MCF 10A (cell line): ENCODE measurements at regions of chr7 and their contacts with region 1.

Region 1: DNA sequence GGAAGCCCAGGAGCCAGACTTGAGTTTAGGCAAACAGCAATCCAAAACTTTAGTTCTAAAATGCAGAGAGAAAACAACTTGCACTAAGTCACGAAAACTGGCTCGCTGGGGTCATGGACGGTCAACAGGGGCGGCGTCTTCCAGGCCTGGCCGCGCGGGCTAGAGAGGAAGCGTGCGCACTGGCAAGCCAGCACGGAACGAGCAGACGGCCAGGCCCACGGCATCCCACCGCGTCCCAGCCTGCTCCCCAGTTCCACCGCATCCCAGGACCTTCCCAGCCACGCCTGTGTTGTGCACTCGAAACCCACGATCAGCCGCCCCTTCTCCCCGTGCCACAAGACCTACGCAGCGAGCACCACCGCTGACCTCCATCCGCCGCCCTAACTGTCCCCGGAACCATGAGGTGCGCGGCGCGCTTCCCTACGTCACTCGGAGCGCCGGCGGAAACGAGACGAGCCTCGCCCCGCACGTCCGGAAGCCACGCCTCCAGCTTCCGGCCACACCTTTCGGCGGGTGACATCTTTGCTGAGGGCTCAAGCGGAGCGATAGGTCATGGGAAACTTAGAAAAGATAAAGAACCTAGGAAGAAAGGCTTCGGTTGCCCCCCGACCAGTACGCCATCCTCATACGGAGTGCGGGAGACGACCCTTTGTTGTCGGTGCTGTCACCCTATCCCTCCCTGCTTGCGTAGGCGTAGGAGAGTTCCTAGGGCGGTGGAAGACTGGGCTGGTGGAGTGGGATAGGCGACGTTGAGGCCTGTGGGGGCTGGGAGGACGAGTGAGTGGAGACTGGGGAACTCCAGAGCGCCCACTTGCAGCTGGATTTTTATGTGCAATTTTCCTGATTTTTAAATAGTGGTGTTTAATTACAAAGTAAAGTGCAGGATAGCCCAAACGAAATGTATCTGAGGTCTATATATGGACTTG is at the start of gene TBRG4:
- DNase-seq: peak; percentile 94
- H3K4me3 Mint-ChIP-seq: peak within 1 kb of the TSS; percentile 91
- H3K27ac Mint-ChIP-seq: peak within 1 kb of the TSS; percentile 97
- H3K4me1 Mint-ChIP-seq: peaks cover 19% of the 10 kb centered on the region
- H3K27me3 Mint-ChIP-seq: no peaks in the 10 kb centered on the region
- CTCF ChIP-seq: no peak
- total RNA-seq, gene TBRG4: 77.2 and 85.7 TPM in 2 replicates

Region 2: DNA sequence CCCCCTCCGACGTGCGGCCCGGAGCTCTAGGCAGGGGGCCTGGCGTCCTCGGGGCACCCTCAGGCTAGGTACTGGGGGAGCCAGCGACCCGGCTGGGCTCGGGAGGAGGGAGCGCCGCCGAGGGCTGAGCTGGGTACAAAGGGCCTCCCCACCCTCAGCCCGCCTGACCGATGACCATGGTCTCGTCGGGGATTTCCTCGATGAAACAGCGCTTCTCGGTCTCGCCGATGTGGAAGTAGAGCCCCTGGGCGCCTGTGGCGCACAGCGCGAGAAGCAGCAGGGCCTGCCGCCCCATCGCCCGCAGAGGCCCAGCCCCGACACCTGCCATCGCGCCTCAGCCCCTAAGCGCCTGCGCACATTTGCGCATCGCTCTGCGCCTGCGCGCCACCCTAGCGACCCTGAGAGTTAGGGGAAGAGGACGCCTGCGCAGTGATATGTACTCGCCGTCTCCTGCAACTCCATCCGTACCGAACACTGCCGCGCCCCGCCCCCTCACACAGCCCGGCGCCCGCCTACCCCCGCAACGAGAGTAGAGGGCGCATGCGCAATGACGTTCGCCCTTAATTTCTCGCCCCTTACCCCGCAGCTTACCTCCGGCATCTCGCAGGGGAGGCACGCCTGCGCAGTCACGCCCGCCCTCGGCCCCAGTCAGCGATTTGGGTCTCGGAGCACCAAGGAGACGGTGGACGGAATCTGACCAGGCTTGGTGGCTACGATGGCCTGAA is 529.5 kb before region 1 on chr7 and contains the start of gene TMED4:
- CTCF ChIA-PET with region 1: no interaction called
- POLR2A ChIA-PET with region 1: interaction called, 16 read pairs
- intact Hi-C with region 1: no loop called
- DNase-seq: peak; percentile 99
- H3K4me3 Mint-ChIP-seq: peak within 1 kb of the TSS; percentile 85
- H3K27ac Mint-ChIP-seq: peak within 1 kb of the TSS; percentile 93
- H3K4me1 Mint-ChIP-seq: peaks cover 6% of the 10 kb centered on the region
- H3K27me3 Mint-ChIP-seq: no peaks in the 10 kb centered on the region
- CTCF ChIP-seq: no peak
- total RNA-seq, gene TMED4: 49.7 and 58.0 TPM in 2 replicates

Region 3: DNA sequence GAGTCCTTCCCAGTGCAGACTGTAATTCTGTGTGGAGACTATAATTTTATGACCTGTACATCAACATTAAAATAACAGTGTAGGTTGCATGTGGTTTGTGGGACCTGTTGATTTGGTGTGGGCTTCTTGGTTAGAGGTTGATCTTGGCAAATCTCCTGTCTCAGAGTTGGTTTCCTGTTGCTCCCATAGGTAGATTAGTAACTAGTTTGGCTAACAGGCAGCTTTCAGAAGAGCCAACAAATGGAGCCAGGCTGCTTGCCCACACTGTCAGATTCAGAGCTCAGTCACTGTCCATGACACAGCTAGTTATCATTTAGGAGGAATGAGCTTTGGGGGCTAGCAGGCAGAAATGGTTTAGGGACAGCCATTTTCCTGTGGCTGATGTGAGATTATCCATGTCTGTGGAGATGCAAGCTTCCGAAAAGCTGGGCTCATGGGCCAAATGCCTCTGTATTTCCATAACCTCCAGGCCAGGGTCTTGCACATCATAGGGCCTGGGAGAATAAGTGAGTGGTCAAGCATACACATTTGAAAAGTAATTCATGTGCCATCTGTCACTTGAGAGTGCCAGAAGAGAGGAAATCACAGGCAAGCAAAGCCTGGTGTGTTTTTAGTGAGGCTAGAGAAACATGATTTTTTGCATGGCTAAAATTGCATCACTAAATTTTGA is 78.2 kb before region 1 on chr7:
- CTCF ChIA-PET with region 1: no interaction called
- POLR2A ChIA-PET with region 1: interaction called, 10 read pairs
- intact Hi-C with region 1: no loop called
- DNase-seq: peak; percentile 50
- H3K4me3 Mint-ChIP-seq: no peak overlapping the region
- H3K27ac Mint-ChIP-seq: peak overlapping the region; percentile 90
- H3K4me1 Mint-ChIP-seq: peaks cover 33% of the 10 kb centered on the region
- H3K27me3 Mint-ChIP-seq: no peaks in the 10 kb centered on the region
- CTCF ChIP-seq: no peak

Region 4: DNA sequence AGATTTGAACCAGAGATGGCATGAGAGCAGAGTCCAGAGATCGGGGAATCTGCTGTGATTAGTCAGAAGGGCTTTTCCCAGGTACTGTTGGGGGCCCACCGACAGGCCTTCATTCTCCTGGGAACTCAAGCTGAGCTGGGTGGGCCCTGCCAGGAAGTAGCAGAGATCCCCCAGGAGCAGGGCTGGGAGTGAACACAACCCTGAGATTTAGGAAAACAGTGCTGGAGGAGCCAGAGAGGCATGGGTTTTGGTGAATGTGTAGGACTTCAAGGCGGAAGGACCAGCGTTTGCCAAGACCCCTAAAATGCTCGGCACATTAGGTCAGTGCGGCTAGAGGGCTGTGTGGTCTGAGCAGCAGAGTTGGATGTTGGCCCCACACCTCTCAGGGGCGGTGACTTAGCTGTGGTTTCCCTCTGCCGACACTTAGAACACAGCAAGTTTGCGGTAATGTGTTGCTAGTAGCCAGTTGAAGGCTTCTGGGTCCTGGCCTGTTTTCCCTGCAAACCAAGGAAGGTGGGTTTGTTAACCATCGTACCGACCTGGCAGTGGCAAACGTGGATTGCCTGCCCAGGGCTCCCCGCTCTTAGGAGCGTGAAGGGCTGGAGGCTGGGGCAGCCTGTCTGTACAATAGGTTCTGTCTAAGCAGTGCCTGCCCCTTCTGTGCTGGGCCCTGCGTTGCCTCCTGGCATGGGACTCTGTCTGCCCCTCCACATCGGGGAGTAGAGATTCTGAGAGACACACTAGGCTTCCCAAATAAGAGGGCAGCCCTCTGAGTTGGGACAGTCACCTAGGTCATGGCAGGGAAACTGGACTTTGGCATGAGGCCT is 36.8 kb before region 1 on chr7:
- CTCF ChIA-PET with region 1: no interaction called
- POLR2A ChIA-PET with region 1: no interaction called
- intact Hi-C with region 1: no loop called
- DNase-seq: no peak
- H3K4me3 Mint-ChIP-seq: no peak overlapping the region
- H3K27ac Mint-ChIP-seq: no peak overlapping the region
- H3K4me1 Mint-ChIP-seq: peaks cover 21% of the 10 kb centered on the region
- H3K27me3 Mint-ChIP-seq: no peaks in the 10 kb centered on the region
- CTCF ChIP-seq: no peak

Region 5: DNA sequence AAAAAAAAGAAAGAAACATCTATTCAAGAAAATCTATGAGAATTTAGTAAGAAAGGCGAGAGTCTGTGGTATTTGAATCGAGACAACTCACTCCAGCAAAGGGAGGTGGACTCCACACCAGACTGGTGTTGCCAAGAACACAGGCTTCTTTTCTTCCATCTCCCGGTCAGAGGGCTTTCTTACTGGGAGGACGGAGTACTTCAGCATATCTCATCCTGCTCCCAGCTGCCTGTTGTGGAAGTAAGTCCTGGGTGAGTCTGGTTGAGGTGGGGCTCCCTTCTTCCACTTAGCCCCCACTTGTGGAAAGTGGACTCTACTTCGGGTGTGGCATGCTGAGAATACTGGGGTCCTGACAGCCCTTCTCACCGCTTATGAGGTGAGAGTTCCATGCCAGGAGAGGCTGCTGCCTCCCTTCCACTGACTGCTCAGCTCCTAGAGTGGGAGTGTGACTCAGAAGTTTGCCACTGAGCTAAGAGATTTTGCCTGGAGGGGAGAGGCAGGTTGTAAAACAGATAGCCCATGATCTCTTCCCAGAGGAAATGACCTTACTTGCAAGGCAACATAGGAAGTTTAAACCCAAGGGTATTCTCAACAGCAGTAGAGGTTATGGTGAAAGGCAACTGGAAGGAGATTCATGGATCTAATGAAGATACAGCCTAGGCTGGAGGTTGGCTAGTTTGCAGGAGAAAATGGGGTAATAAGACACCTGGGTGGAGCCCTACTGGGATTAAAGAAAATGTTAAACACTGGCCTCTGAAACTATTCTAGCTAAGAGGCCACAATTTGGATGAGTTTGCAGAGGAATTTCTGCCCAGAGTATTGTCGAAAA is 19.2 kb before region 1 on chr7:
- CTCF ChIA-PET with region 1: interaction called, 3 read pairs
- POLR2A ChIA-PET with region 1: interaction called, 16 read pairs
- intact Hi-C with region 1: no loop called
- DNase-seq: peak; percentile 74
- H3K4me3 Mint-ChIP-seq: no peak overlapping the region
- H3K27ac Mint-ChIP-seq: no peak overlapping the region
- H3K4me1 Mint-ChIP-seq: peaks cover 12% of the 10 kb centered on the region
- H3K27me3 Mint-ChIP-seq: no peaks in the 10 kb centered on the region
- CTCF ChIP-seq: no peak